IMR-90 (cell line): ENCODE measurements at regions of chr9 and their contacts with region 1.

Region 1: DNA sequence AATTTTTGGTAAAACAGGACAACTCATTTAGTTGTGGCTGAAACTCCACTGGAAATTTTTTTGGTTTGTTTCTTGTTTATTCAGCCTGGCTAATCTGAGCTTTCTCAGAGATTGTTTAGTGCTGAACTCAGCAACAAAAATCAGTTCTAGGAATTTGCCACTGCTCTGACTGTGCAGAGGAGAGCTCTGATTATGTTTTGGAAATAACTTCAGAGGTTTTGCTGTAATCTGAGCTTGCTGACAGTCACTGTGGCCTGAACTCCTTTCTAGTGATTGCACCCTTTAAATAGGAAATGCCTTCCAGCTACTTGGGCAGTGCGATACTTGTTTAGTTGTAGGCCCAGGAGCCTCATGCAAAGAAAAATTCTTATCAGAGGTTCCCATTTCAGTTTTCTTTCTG is 60.2 kb downstream of the OSTF1 start:
- DNase-seq: peak; percentile 95
- ATAC-seq: peak; percentile 97
- H3K4me3 ChIP-seq: no peak overlapping the region
- H3K27ac ChIP-seq: no peak overlapping the region
- H3K4me1 ChIP-seq: peaks cover 6% of the 10 kb centered on the region
- H3K27me3 ChIP-seq: no peaks in the 10 kb centered on the region
- CTCF ChIP-seq: no peak
- POLR2A ChIP-seq: no peak
- RAD21 ChIP-seq: no peak

Region 2: GRCh38 chr9:74391816-74392215 is 756.7 kb before region 1 on chr9:
- CTCF ChIA-PET with region 1: no interaction called
- POLR2A ChIA-PET with region 1: no interaction called
- dilution Hi-C with region 1: no loop called
- in situ Hi-C with region 1: no loop called
- intact Hi-C with region 1: no loop called
- DNase-seq: no peak
- ATAC-seq: no peak
- H3K4me3 ChIP-seq: no peak overlapping the region
- H3K27ac ChIP-seq: no peak overlapping the region
- H3K4me1 ChIP-seq: no peaks in the 10 kb centered on the region
- H3K27me3 ChIP-seq: no peaks in the 10 kb centered on the region
- CTCF ChIP-seq: no peak
- POLR2A ChIP-seq: no peak
- RAD21 ChIP-seq: no peak

Region 3: GRCh38 chr9:75039009-75039408 is 109.6 kb before region 1 on chr9:
- CTCF ChIA-PET with region 1: no interaction called
- POLR2A ChIA-PET with region 1: no interaction called
- dilution Hi-C with region 1: no loop called
- in situ Hi-C with region 1: no loop called
- intact Hi-C with region 1: loop called (anchors 2 kb)
- DNase-seq: peak; percentile 95
- ATAC-seq: peak; percentile 90
- H3K4me3 ChIP-seq: no peak overlapping the region
- H3K27ac ChIP-seq: peak overlapping the region; percentile 93
- H3K4me1 ChIP-seq: peaks cover 18% of the 10 kb centered on the region
- H3K27me3 ChIP-seq: no peaks in the 10 kb centered on the region
- CTCF ChIP-seq: no peak
- POLR2A ChIP-seq: no peak
- RAD21 ChIP-seq: no peak

Region 4: GRCh38 chr9:75053869-75054268 is 94.7 kb before region 1 on chr9:
- CTCF ChIA-PET with region 1: no interaction called
- POLR2A ChIA-PET with region 1: no interaction called
- dilution Hi-C with region 1: no loop called
- in situ Hi-C with region 1: no loop called
- intact Hi-C with region 1: no loop called
- DNase-seq: no peak
- ATAC-seq: no peak
- H3K4me3 ChIP-seq: no peak overlapping the region
- H3K27ac ChIP-seq: no peak overlapping the region
- H3K4me1 ChIP-seq: peaks cover 2% of the 10 kb centered on the region; the same call in 1 of the 2 replicates
- H3K27me3 ChIP-seq: no peaks in the 10 kb centered on the region
- CTCF ChIP-seq: no peak
- POLR2A ChIP-seq: no peak
- RAD21 ChIP-seq: no peak

Region 5: GRCh38 chr9:75088260-75088905 is 60.2 kb before region 1 on chr9 and contains the start of gene OSTF1:
- CTCF ChIA-PET with region 1: interaction called, 3 read pairs
- POLR2A ChIA-PET with region 1: no interaction called
- dilution Hi-C with region 1: no loop called
- in situ Hi-C with region 1: no loop called
- intact Hi-C with region 1: loop called (anchors 1 kb)
- DNase-seq: peak; percentile 96
- ATAC-seq: peak; percentile 96
- H3K4me3 ChIP-seq: peak within 1 kb of the TSS; percentile 99
- H3K27ac ChIP-seq: peak within 1 kb of the TSS; percentile 80
- H3K4me1 ChIP-seq: peaks cover 2% of the 10 kb centered on the region; the same call in 1 of the 2 replicates
- H3K27me3 ChIP-seq: no peaks in the 10 kb centered on the region
- CTCF ChIP-seq: no peak
- POLR2A ChIP-seq: peak; percentile 72
- RAD21 ChIP-seq: no peak
- total RNA-seq, gene OSTF1: 41.6 and 50.0 TPM in 2 replicates

Region 6: DNA sequence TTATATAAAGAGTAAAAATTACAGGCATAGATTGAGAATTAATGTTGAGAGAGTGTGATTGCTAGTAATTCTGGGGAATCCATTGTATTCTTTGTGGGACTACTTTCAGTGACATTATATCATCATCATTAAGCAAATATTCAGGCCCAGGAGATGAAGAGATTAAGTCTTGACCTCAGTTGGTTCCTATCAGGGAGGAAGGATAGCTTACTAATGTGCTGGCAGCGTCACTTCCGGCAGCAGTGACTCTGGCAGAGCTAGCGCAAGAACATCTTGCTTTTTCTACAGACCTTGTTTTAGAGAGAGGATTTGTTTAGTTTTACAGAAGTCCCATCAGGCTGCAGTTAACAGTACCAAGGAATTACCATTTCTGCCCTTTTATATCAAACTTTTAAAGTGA is 40.0 kb before region 1 on chr9:
- CTCF ChIA-PET with region 1: interaction called, 3 read pairs
- POLR2A ChIA-PET with region 1: no interaction called
- dilution Hi-C with region 1: no loop called
- in situ Hi-C with region 1: no loop called
- intact Hi-C with region 1: loop called (anchors 5 kb)
- DNase-seq: peak; percentile 79
- ATAC-seq: peak; percentile 73
- H3K4me3 ChIP-seq: no peak overlapping the region
- H3K27ac ChIP-seq: no peak overlapping the region
- H3K4me1 ChIP-seq: peaks cover 2% of the 10 kb centered on the region; the same call in 1 of the 2 replicates
- H3K27me3 ChIP-seq: no peaks in the 10 kb centered on the region
- CTCF ChIP-seq: no peak
- POLR2A ChIP-seq: no peak
- RAD21 ChIP-seq: no peak

Region 7: DNA sequence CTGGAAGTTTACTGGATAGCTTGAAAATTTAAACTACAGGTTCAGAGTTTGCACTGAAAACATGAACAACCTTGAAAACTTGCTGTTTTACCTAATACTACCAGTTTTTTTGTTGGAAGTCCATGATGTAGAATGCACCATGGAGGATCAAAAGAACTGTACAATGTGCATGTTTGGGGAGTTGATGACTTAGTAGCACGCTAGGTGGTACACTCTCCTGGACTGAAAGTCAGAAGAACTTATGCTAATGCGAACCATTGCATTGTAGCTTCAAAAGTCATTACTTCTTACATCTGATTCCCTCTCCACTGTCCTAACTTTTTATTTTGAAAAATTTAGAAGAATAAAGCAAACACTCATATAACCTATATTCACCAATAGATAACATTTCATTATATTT is 150.8 kb after region 1 on chr9:
- CTCF ChIA-PET with region 1: no interaction called
- POLR2A ChIA-PET with region 1: no interaction called
- dilution Hi-C with region 1: no loop called
- in situ Hi-C with region 1: no loop called
- intact Hi-C with region 1: no loop called
- DNase-seq: no peak
- ATAC-seq: no peak
- H3K4me3 ChIP-seq: no peak overlapping the region
- H3K27ac ChIP-seq: no peak overlapping the region
- H3K4me1 ChIP-seq: no peaks in the 10 kb centered on the region
- H3K27me3 ChIP-seq: no peaks in the 10 kb centered on the region
- CTCF ChIP-seq: no peak
- POLR2A ChIP-seq: no peak
- RAD21 ChIP-seq: no peak